ENCODE measurements at regions of chr1 and their contacts with region 1.

Region 1: DNA sequence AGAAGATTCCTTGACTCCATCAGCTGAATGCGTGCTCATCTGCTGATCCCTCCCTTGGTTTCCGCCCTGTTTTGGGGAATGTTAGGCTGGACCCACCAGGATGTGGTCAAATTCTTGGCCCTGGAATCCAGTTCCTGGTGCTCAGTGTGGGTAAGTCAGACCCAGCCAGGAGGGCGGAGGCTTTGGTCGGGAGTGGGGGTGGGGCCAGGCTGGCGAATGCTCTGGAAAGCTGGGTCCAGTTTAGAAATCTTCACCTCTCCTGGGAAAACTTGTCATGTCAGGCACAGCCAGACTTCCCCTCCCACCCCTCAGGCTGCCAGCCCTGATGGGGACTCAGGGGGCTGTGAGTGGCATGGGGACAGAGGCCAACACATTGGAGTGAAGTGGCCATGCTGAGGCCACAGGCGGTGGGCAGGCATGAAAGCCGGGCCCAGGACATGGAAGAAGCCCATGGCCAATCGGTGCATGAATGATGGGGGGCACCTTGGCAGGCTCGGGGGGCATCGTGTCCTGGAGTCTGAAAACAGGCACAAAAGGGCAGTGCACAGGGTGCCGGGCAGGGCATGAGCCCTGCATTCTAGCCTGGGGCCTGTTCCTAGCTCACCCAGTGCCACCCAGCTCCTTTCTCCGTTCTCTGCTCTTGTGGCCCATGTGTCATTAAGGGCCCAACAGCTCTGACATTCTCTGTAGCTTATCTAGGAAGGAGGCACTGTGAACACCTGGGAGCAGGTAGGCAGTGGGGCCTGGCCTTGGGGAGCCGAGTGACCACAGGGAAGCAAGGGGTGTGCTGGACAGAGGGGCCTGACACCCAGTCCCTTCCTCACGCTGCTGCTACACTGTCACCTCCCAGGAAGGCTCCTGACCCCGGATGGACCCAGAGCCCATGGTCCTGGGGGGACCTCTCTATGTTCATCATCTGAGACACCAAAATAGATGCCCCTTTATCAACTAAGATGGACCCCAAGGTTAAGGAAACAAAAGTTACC is 14.6 kb upstream of the PADI1 start:
- DNase-seq: peak; percentile 97
- H3K4me3 ChIP-seq: no peak overlapping the region
- CTCF ChIP-seq: no peak

Region 2: GRCh38 chr1:17168091-17168876 is 22.0 kb before region 1 on chr1:
- CTCF ChIA-PET with region 1: interaction called, 10 read pairs
- POLR2A ChIA-PET with region 1: interaction called, 30 read pairs
- DNase-seq: peak; percentile 89
- H3K4me3 ChIP-seq: no peak overlapping the region
- CTCF ChIP-seq: no peak